Sciatic nerve (tissue), 2 donors: ENCODE measurements at regions of chr19 and their contacts with region 1.

Region 1: DNA sequence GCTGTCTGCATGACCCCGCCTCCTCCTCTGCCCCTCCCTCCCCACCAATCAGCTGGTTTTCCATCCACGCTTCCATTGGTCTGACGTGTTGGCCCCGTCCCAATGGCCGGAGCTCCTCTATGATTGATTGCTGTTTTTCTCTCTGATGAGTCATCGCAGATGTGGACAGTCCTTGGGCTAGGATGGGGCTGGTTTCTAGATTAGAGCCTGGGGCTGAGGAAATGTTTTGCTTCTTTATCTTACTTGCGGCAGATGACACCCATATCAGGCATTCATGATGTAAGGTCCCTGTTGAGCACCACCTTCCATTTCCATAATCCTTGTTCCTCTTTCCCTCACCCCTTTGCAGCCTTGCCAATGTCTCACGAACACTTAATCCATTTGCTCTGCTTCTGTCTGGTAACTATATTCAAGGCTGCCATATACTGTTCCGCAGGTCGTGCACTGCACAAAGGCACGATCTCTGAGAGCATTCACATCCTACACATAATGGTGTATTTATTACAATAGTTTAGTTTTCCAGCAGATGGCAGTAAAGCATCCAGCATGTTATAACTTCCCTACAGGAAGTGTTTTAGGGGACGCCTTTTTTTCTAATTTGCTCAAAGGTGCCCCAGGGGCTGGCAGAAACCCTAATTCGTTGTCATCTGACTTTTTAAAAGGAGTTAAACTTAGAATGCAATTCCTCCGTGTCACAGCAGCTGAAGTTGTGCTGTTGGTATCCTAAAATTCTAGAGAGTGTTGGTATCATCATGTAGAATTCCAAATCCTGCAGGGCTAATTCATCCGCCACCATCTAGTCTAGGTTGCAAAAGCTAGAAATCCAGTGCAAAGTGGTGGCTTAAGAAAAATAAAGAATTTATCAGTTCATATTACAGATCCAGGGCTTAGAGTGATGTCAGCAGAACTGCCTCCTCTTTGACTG is 73.5 kb downstream of the MAP4K1 start:
- DNase-seq: no peak
- ATAC-seq: peak; percentile 90

Region 2: GRCh38 chr19:38904581-38905539 is 360.6 kb after region 1 on chr19:
- intact Hi-C with region 1: loop called (anchors 1 kb)
- DNase-seq: no peak
- ATAC-seq: no peak